K562 (cell line): ENCODE measurements at regions of chr21 and their contacts with region 1.

Region 1: DNA sequence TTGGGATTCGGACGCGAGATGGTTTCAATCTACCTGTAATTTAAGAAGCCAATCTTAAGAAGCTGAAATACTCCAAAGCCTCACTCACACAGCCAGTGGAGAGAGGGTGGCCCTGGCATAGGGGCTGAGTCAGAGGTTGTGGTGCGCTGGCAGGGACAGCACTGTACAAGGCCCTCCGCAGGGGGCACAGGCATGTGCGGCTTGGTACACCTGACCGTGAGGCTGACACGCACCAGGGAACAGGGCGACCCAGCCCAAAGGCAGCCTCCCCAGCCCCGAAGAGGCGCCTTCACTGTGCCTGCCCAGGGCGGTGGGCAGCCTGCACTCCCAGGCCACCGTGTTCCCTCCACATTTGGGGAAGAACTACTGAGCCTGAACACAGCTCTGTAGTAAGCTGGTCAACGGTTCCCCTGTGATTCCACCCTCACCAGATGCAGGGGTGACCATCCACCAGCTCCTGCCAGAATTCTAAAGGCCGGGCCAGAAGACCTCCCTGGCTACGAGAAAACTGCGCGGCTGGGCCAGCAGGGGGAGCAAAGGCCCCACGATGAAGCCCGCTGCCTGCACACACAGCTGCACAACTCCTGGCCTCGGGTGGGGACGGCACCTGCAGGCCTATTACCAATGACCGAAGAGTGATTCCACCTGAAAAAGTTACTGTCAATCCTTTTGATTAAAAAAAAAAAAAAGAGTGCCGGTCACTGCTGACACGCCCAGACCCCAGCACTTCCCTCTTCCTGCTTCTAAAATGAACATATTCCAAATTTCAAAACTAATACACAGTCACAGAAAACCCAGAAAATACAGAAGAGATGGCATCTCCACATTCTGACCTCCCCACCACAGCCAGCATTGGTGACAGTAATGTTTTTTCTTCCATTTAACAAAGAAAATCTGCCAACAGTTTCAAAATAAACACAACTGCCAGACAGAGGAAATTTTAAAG is 49.6 kb upstream of the RIPK4 start:
- DNase-seq: peak; percentile 76 to 90 (median 84)
- ATAC-seq: peak; percentile 98
- H3K4me3 ChIP-seq: no peak overlapping the region
- H3K27ac ChIP-seq: no peak overlapping the region
- H3K4me1 ChIP-seq: peaks cover 0 to 16% of the 10 kb centered on the region in 2 experiments; a peak in 1 of 5 replicates
- H3K27me3 ChIP-seq: no peaks in the 10 kb centered on the region
- CTCF ChIP-seq: peak; percentile 88 to 93 (median 91)
- EP300 ChIP-seq: no peak
- POLR2A ChIP-seq: no peak
- RAD21 ChIP-seq: peak; percentile 86 to 90

Region 2: GRCh38 chr21:41612674-41613532 is 203.6 kb before region 1 on chr21:
- CTCF ChIA-PET with region 1: interaction called, 6 read pairs
- POLR2A ChIA-PET with region 1: no interaction called
- in situ Hi-C with region 1: no loop called
- intact Hi-C with region 1: loop called (anchors 1 kb)
- DNase-seq: peak; percentile 52 to 76 (median 74)
- ATAC-seq: peak; percentile 90
- H3K4me3 ChIP-seq: no peak overlapping the region
- H3K27ac ChIP-seq: no peak overlapping the region
- H3K4me1 ChIP-seq: no peaks in the 10 kb centered on the region
- H3K27me3 ChIP-seq: peaks cover 17 to 55% of the 10 kb centered on the region in 2 experiments
- CTCF ChIP-seq: peak; percentile 64 to 79 (median 71)
- EP300 ChIP-seq: no peak
- POLR2A ChIP-seq: no peak
- RAD21 ChIP-seq: peak; percentile 45 to 74

Region 3: GRCh38 chr21:41847066-41847804 is 30.7 kb after region 1 on chr21:
- CTCF ChIA-PET with region 1: interaction called, 3 read pairs
- POLR2A ChIA-PET with region 1: no interaction called
- in situ Hi-C with region 1: no loop called
- intact Hi-C with region 1: loop called (anchors 2 kb)
- DNase-seq: peak; percentile 63 to 66 (median 64)
- ATAC-seq: peak; percentile 93
- H3K4me3 ChIP-seq: no peak overlapping the region
- H3K27ac ChIP-seq: peak overlapping the region; percentile 16; the same call in 1 of the 3 replicates
- H3K4me1 ChIP-seq: peaks cover 14 to 31% of the 10 kb centered on the region in 2 experiments; a peak in 4 of 5 replicates
- H3K27me3 ChIP-seq: no peaks in the 10 kb centered on the region
- CTCF ChIP-seq: peak; percentile 59 to 64 (median 62)
- EP300 ChIP-seq: no peak
- POLR2A ChIP-seq: no peak
- RAD21 ChIP-seq: peak in 1 of 2 experiments; percentile 64; a peak in 2 of 4 replicates

Region 4: GRCh38 chr21:41916888-41917433 is 100.5 kb after region 1 on chr21:
- CTCF ChIA-PET with region 1: interaction called, 10 read pairs
- POLR2A ChIA-PET with region 1: no interaction called
- in situ Hi-C with region 1: no loop called
- intact Hi-C with region 1: loop called (anchors 2 kb)
- DNase-seq: peak in 1 of 4 experiments; percentile 16
- ATAC-seq: peak; percentile 53; the same call in 2 of the 3 replicates
- H3K4me3 ChIP-seq: no peak overlapping the region
- H3K27ac ChIP-seq: no peak overlapping the region
- H3K4me1 ChIP-seq: peaks cover 0 to 3% of the 10 kb centered on the region in 2 experiments; a peak in 1 of 5 replicates
- H3K27me3 ChIP-seq: no peaks in the 10 kb centered on the region
- CTCF ChIP-seq: peak in 2 of 3 experiments; percentile 44 to 57; a peak in 4 of 6 replicates
- EP300 ChIP-seq: no peak
- POLR2A ChIP-seq: no peak
- RAD21 ChIP-seq: peak; percentile 31 to 56; a peak in 3 of 4 replicates

Region 5: DNA sequence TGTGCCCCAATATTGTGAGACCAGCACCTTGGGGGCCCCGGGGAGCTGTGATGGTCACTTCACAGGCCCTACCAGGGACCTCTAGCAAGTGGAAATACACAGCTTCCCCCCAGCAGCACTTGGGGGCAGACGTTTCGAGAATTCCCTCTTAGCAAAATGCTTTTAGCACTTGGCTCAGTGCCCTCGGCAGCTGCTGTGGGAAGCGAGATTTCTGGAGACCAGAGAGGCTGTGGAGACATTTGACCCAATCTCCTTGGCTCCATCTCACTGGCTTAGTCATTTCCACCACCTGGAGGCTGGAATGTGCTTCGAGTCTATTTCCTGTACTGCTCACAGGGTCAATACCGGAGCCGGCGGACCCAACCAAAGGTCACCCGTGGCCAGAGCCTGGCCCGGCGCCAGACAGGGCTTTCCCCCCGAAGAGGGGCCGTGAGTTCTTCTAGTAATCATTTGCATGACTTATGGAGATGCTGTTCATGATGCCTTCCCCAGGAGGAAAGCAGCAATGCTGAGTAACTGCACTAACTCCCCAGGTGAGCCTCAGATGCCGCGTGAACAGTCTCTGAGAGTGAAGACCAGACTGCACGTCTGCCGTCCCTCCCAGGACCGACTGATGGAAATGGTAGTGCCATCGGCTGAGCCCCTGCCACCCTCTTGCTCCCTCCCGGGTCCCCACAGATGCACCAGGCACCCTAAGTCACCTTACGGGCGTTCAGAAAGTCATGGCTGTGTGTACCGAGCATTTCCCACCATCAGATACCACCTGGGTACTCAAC is 141.7 kb after region 1 on chr21:
- CTCF ChIA-PET with region 1: interaction called, 3 read pairs
- POLR2A ChIA-PET with region 1: no interaction called
- in situ Hi-C with region 1: no loop called
- intact Hi-C with region 1: loop called (anchors 5 kb)
- DNase-seq: peak; percentile 66 to 89 (median 75)
- ATAC-seq: peak; percentile 65
- H3K4me3 ChIP-seq: no peak overlapping the region
- H3K27ac ChIP-seq: peak overlapping the region; percentile 76
- H3K4me1 ChIP-seq: peaks cover 31 to 53% of the 10 kb centered on the region in 2 experiments
- H3K27me3 ChIP-seq: peaks cover 15 to 26% of the 10 kb centered on the region in 2 experiments
- CTCF ChIP-seq: peak; percentile 37 to 51 (median 50); a peak in 5 of 6 replicates
- EP300 ChIP-seq: peak; percentile 56; the same call in 1 of the 2 replicates
- POLR2A ChIP-seq: no peak
- RAD21 ChIP-seq: peak in 1 of 2 experiments; percentile 63; a peak in 2 of 4 replicates

Region 6: DNA sequence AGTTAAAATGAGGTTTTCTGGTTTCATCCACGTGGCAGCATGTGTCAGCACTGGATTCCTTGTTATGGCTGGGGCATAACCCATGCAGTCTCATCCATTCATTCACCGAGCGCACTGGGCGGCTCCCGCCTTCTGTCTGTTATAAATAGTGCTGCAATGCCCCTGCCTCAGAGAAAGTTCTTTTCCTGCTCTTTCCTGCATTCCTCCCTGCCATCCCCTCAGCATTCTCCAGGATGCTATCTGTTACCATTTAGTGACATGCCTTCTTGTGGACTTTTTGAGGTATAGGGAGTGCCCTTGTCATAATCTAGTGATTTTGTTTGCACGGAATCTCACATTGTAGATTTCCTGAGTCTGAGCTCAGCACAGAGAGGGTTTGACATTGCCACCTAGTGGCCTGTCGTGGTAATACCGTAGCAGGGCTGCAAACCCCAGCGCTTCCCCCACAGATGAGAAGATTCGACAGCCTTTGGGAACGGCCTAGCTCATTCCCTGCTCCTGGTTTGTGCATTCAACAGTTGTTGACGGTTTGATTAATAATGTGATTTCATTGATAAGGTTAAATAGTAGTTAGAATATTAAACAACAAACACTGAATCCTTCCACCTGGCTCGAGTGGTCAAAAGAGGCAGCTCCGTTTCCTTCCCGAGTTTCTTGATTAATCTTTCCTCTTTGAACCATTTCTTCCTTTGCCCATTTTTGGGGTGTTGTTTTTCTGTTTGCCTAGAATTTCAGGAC is 300.9 kb after region 1 on chr21:
- CTCF ChIA-PET with region 1: interaction called, 23 read pairs
- POLR2A ChIA-PET with region 1: no interaction called
- in situ Hi-C with region 1: loop called (anchors 10 kb)
- intact Hi-C with region 1: loop called (anchors 1 kb)
- DNase-seq: peak; percentile 79 to 88 (median 85)
- ATAC-seq: peak; percentile 94
- H3K4me3 ChIP-seq: no peak overlapping the region
- H3K27ac ChIP-seq: no peak overlapping the region
- H3K4me1 ChIP-seq: peaks cover 0 to 4% of the 10 kb centered on the region in 2 experiments; a peak in 2 of 5 replicates
- H3K27me3 ChIP-seq: peaks cover 27 to 71% of the 10 kb centered on the region in 2 experiments; a peak in 4 of 5 replicates
- CTCF ChIP-seq: peak; percentile 87 to 93 (median 93)
- EP300 ChIP-seq: no peak
- POLR2A ChIP-seq: no peak
- RAD21 ChIP-seq: peak; percentile 75 to 90

Region 7: GRCh38 chr21:42171091-42172053 is 354.9 kb after region 1 on chr21:
- CTCF ChIA-PET with region 1: no interaction called
- POLR2A ChIA-PET with region 1: no interaction called
- in situ Hi-C with region 1: no loop called
- intact Hi-C with region 1: no loop called
- DNase-seq: peak in 1 of 4 experiments; percentile 17
- ATAC-seq: no peak; the same call in 2 of the 3 replicates
- H3K4me3 ChIP-seq: no peak overlapping the region
- H3K27ac ChIP-seq: no peak overlapping the region
- H3K4me1 ChIP-seq: no peaks in the 10 kb centered on the region
- H3K27me3 ChIP-seq: peaks cover 20 to 28% of the 10 kb centered on the region in 2 experiments; a peak in 4 of 5 replicates
- CTCF ChIP-seq: no peak
- EP300 ChIP-seq: no peak
- POLR2A ChIP-seq: no peak
- RAD21 ChIP-seq: no peak